ENCODE measurements at regions of chr3 and their contacts with region 1.

Region 1: GRCh38 chr3:66822186-66823008 is 175.7 kb upstream of the KBTBD8 start:
- DNase-seq: peak; percentile 25 to 60
- ATAC-seq: peak; percentile 90 to 93
- H3K4me3 ChIP-seq: no peak overlapping the region
- H3K27ac ChIP-seq: no peak overlapping the region
- H3K4me1 ChIP-seq: no peaks in the 10 kb centered on the region
- CTCF ChIP-seq: peak; percentile 54
- EP300 ChIP-seq: no peak
- POLR2A ChIP-seq: no peak
- RAD21 ChIP-seq: peak; percentile 48 to 49; a peak in 4 of 5 replicates

Region 2: DNA sequence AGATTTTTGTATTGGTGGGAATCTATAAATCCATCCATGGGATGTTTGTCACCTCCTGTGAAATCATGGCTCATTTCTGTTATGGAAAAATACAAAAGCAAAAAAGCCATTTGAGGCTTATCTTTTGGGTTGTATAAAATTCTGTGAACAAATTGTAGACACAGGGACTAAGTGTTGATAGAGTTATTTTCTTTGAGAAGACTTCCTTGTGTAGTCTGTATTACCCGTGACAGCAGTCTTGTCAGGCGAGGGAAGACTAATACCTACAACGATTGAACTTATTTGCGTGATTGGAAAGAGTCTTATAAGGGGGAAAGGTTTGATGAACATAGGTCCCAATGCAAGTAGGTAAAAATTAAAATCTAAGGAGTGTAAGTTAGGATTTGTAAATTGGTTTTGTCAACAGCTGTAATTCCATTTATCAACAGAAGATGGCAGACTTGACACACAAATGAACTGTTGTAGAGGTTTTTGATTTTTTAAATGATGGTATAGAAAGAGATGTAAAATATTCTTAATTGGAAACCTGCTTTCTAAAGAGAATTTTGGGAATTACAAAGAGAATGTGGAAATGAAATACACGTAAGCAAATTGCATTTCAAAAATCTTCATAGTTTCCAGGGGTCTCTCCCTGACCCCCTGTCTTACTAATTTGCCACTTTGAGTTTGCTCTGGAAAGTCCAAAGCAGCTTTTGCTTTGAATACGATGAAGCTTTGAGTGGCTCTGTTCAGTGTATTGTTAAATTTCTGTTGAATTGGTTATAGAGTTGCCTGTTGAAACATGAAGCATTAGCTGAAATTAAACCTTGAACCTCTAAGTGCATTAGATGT is 568.4 kb before region 1 on chr3:
- CTCF ChIA-PET with region 1: interaction called, 27 read pairs
- POLR2A ChIA-PET with region 1: no interaction called
- DNase-seq: peak in 1 of 2 experiments; percentile 42
- ATAC-seq: no peak; a peak in 1 of 6 replicates
- H3K4me3 ChIP-seq: no peak overlapping the region
- H3K27ac ChIP-seq: no peak overlapping the region
- H3K4me1 ChIP-seq: no peaks in the 10 kb centered on the region
- CTCF ChIP-seq: peak; percentile 55
- EP300 ChIP-seq: no peak
- POLR2A ChIP-seq: no peak
- RAD21 ChIP-seq: peak; percentile 43 to 61; a peak in 4 of 5 replicates

Region 3: DNA sequence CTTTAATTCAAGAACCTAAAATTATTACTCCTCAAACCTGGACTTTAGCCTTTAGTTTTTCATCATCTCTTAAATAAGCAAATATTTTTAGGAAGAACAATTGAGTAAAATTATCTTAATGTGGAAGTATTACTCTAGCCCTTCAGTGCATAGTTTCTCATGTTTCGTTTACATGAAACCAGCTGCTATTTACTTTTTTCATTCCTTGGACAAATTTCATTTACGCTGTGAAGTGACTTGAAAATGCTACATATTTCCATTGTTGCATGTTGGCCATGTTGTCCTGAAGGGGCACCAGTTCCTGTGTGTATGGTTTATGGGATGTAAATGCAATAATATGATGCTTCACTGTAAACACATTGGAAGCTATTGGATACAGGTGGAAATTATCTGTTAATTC is 551.7 kb before region 1 on chr3:
- CTCF ChIA-PET with region 1: interaction called, 16 read pairs
- POLR2A ChIA-PET with region 1: no interaction called
- DNase-seq: no peak
- ATAC-seq: no peak
- H3K4me3 ChIP-seq: no peak overlapping the region
- H3K27ac ChIP-seq: no peak overlapping the region
- H3K4me1 ChIP-seq: no peaks in the 10 kb centered on the region
- CTCF ChIP-seq: no peak
- EP300 ChIP-seq: no peak
- POLR2A ChIP-seq: no peak
- RAD21 ChIP-seq: no peak

Region 4: DNA sequence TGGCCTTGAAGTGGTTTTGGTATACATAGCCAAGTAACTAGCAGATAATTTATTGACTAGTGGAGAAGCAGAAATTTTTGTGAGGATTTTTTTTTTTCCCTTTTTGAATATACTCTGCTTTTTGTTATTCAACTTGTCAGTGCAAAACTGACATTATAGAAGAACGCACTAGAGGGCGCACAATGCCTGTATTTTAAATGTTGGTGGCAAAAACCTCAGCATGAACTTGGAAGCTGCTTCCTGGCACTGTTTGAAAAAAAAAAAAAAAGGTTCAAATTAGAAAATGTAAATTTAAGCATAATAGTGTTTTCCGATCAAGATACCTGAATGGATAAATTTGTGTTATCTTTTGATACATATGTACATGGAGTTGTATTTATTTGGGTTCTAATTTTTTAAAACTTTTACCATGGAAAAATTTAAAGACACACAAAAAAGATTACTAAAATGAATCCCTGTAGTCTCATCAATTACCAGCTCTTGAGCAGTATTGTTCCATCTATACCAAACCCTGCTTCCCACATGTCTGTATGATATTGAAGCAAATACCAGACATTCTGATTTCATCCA is 545.6 kb before region 1 on chr3:
- CTCF ChIA-PET with region 1: interaction called, 30 read pairs
- POLR2A ChIA-PET with region 1: no interaction called
- DNase-seq: peak; percentile 4 to 62
- ATAC-seq: peak in 1 of 2 experiments; percentile 54; a peak in 2 of 6 replicates
- H3K4me3 ChIP-seq: no peak overlapping the region
- H3K27ac ChIP-seq: no peak overlapping the region
- H3K4me1 ChIP-seq: no peaks in the 10 kb centered on the region
- CTCF ChIP-seq: peak; percentile 70
- EP300 ChIP-seq: no peak
- POLR2A ChIP-seq: no peak
- RAD21 ChIP-seq: peak; percentile 66 to 73

Measured in A549 (cell line).